ENCODE measurements at regions of chr22 and their contacts with region 1.

Region 1: DNA sequence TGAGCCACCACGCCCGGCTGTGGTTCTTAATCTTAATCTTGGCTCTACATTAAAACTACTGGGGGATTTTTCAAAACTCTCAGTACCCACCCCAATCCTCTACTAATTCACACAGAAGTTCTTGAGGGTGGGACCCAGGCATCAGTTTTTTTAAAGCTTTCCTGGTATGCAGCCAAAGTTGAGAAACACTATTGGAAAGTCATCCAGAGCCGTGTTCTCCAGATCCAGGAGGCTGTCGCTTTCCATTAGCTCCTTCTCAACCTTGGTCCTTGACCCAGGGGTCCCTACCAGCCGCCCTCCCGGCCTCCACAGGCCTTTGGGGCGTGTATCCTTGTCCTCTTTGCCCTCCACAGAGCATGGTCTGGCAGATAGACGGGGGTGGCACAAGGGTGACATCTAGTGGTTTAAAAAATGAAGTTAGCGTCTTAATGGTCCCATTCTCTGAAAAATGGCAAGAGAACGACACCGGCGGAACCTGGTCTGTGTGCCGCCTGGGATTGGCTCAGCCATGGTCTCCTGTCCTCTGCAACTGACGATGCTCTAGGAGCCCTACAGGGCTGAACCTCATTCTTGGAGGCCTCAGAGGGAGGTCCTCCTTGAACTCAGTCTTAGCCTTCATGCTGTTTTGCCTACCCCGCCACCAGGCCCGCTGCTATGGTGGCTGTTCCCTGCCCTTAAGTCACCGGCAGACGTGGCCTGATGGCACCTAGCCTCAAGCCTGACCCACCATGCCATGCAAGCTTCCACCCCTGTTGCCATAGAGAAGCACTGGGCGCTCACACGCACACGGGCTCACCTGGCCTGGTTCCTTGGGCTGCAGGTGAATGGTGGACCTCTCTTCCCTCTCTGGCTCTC is 152.0 kb upstream of the SYN3 start:
- DNase-seq: peak; percentile 68
- H3K4me3 ChIP-seq: no peak overlapping the region; a peak in 1 of 4 replicates
- H3K27ac ChIP-seq: no peak overlapping the region
- H3K4me1 ChIP-seq: no peaks in the 10 kb centered on the region
- H3K27me3 ChIP-seq: no peaks in the 10 kb centered on the region
- CTCF ChIP-seq: peak; percentile 45
- EP300 ChIP-seq: no peak
- RAD21 ChIP-seq: peak; percentile 68

Region 2: GRCh38 chr22:33220476-33221080 is 10.4 kb after region 1 on chr22:
- CTCF ChIA-PET with region 1: interaction called, 10 read pairs
- POLR2A ChIA-PET with region 1: no interaction called
- DNase-seq: no peak
- H3K4me3 ChIP-seq: no peak overlapping the region
- H3K27ac ChIP-seq: no peak overlapping the region
- H3K4me1 ChIP-seq: no peaks in the 10 kb centered on the region
- H3K27me3 ChIP-seq: no peaks in the 10 kb centered on the region
- CTCF ChIP-seq: no peak
- EP300 ChIP-seq: no peak
- RAD21 ChIP-seq: no peak

Region 3: GRCh38 chr22:33247758-33248157 is 37.6 kb after region 1 on chr22:
- CTCF ChIA-PET with region 1: no interaction called
- POLR2A ChIA-PET with region 1: no interaction called
- DNase-seq: no peak
- H3K4me3 ChIP-seq: no peak overlapping the region
- H3K27ac ChIP-seq: no peak overlapping the region
- H3K4me1 ChIP-seq: no peaks in the 10 kb centered on the region; a peak in 1 of 4 replicates
- H3K27me3 ChIP-seq: no peaks in the 10 kb centered on the region
- CTCF ChIP-seq: no peak
- EP300 ChIP-seq: no peak
- RAD21 ChIP-seq: no peak

Measured in SK-N-SH (cell line).